A673 (cell line): ENCODE measurements at regions of chr5 and their contacts with region 1.

Region 1: GRCh38 chr5:147558826-147559225 is 49.0 kb upstream of the DPYSL3 start:
- DNase-seq: peak; percentile 69
- H3K4me3 ChIP-seq: no peak overlapping the region
- H3K27ac ChIP-seq: no peak overlapping the region
- H3K4me1 ChIP-seq: peaks cover 9% of the 10 kb centered on the region
- H3K27me3 ChIP-seq: no peaks in the 10 kb centered on the region
- CTCF ChIP-seq: peak; percentile 65

Region 2: GRCh38 chr5:147223948-147224791 is 334.7 kb before region 1 on chr5:
- CTCF ChIA-PET with region 1: no interaction called
- POLR2A ChIA-PET with region 1: no interaction called
- intact Hi-C with region 1: loop called (anchors 5 kb)
- DNase-seq: peak; percentile 52
- H3K4me3 ChIP-seq: no peak overlapping the region
- H3K27ac ChIP-seq: no peak overlapping the region
- H3K4me1 ChIP-seq: no peaks in the 10 kb centered on the region
- H3K27me3 ChIP-seq: peaks cover 34% of the 10 kb centered on the region
- CTCF ChIP-seq: peak; percentile 57

Region 3: GRCh38 chr5:147453875-147454814 is 104.7 kb before region 1 on chr5:
- CTCF ChIA-PET with region 1: interaction called, 3 read pairs
- POLR2A ChIA-PET with region 1: no interaction called
- intact Hi-C with region 1: loop called (anchors 1 kb)
- DNase-seq: peak; percentile 94
- H3K4me3 ChIP-seq: peak overlapping the region; percentile 77
- H3K27ac ChIP-seq: peak overlapping the region; percentile 76
- H3K4me1 ChIP-seq: peaks cover 20% of the 10 kb centered on the region
- H3K27me3 ChIP-seq: no peaks in the 10 kb centered on the region
- CTCF ChIP-seq: peak; percentile 99

Region 4: GRCh38 chr5:147464211-147464610 is 94.6 kb before region 1 on chr5:
- CTCF ChIA-PET with region 1: interaction called, 5 read pairs
- POLR2A ChIA-PET with region 1: interaction called, 4 read pairs
- intact Hi-C with region 1: loop called (anchors 2 kb)
- DNase-seq: peak; percentile 69
- H3K4me3 ChIP-seq: no peak overlapping the region
- H3K27ac ChIP-seq: no peak overlapping the region
- H3K4me1 ChIP-seq: no peaks in the 10 kb centered on the region
- H3K27me3 ChIP-seq: no peaks in the 10 kb centered on the region
- CTCF ChIP-seq: peak; percentile 77

Region 5: GRCh38 chr5:147509710-147510651 is 48.8 kb before region 1 on chr5 and contains the start of gene DPYSL3:
- CTCF ChIA-PET with region 1: no interaction called
- POLR2A ChIA-PET with region 1: no interaction called
- intact Hi-C with region 1: loop called (anchors 5 kb)
- DNase-seq: peak; percentile 78
- H3K4me3 ChIP-seq: peak within 1 kb of the TSS; percentile 61
- H3K27ac ChIP-seq: peak within 1 kb of the TSS; percentile 72
- H3K4me1 ChIP-seq: peaks cover 15% of the 10 kb centered on the region
- H3K27me3 ChIP-seq: no peaks in the 10 kb centered on the region
- CTCF ChIP-seq: peak; percentile 48
- total RNA-seq, gene DPYSL3: 24.8 and 35.3 TPM in 2 replicates

Region 6: GRCh38 chr5:147539053-147539452 is 19.8 kb before region 1 on chr5:
- CTCF ChIA-PET with region 1: no interaction called
- POLR2A ChIA-PET with region 1: no interaction called
- intact Hi-C with region 1: loop called (anchors 1 kb)
- DNase-seq: no peak
- H3K4me3 ChIP-seq: no peak overlapping the region
- H3K27ac ChIP-seq: no peak overlapping the region
- H3K4me1 ChIP-seq: no peaks in the 10 kb centered on the region
- H3K27me3 ChIP-seq: no peaks in the 10 kb centered on the region
- CTCF ChIP-seq: no peak

Region 7: GRCh38 chr5:148011401-148012132 is 452.7 kb after region 1 on chr5:
- CTCF ChIA-PET with region 1: no interaction called
- POLR2A ChIA-PET with region 1: no interaction called
- intact Hi-C with region 1: no loop called
- DNase-seq: no peak
- H3K4me3 ChIP-seq: no peak overlapping the region
- H3K27ac ChIP-seq: no peak overlapping the region
- H3K4me1 ChIP-seq: no peaks in the 10 kb centered on the region
- H3K27me3 ChIP-seq: no peaks in the 10 kb centered on the region
- CTCF ChIP-seq: no peak